HepG2 (cell line): ENCODE measurements at regions of chr5 and their contacts with region 1.

Region 1: GRCh38 chr5:79020861-79021561 is 35.9 kb upstream of the ARSB start:
- DNase-seq: peak; percentile 27
- ATAC-seq: peak; percentile 61
- H3K4me3 ChIP-seq: no peak overlapping the region
- H3K27ac ChIP-seq: no peak overlapping the region
- H3K4me1 ChIP-seq: peaks cover 33% of the 10 kb centered on the region
- H3K27me3 ChIP-seq: no peaks in the 10 kb centered on the region
- CTCF ChIP-seq: peak; percentile 83
- EP300 ChIP-seq: no peak
- POLR2A ChIP-seq: no peak
- RAD21 ChIP-seq: peak; percentile 89

Region 2: GRCh38 chr5:78779771-78780616 is 241.0 kb before region 1 on chr5:
- CTCF ChIA-PET with region 1: no interaction called
- POLR2A ChIA-PET with region 1: no interaction called
- in situ Hi-C with region 1: no loop called
- intact Hi-C with region 1: no loop called
- DNase-seq: no peak
- ATAC-seq: no peak
- H3K4me3 ChIP-seq: no peak overlapping the region
- H3K27ac ChIP-seq: no peak overlapping the region
- H3K4me1 ChIP-seq: no peaks in the 10 kb centered on the region
- H3K27me3 ChIP-seq: no peaks in the 10 kb centered on the region
- CTCF ChIP-seq: no peak
- EP300 ChIP-seq: no peak
- POLR2A ChIP-seq: no peak
- RAD21 ChIP-seq: no peak

Region 3: GRCh38 chr5:78984439-78985115 is 36.4 kb before region 1 on chr5:
- CTCF ChIA-PET with region 1: no interaction called
- POLR2A ChIA-PET with region 1: interaction called, 46 read pairs
- in situ Hi-C with region 1: no loop called
- intact Hi-C with region 1: loop called (anchors 2 kb)
- DNase-seq: peak; percentile 79
- ATAC-seq: peak; percentile 67
- H3K4me3 ChIP-seq: peak overlapping the region; percentile 52 to 93 (median 88)
- H3K27ac ChIP-seq: peak overlapping the region; percentile 99
- H3K4me1 ChIP-seq: peaks cover 57% of the 10 kb centered on the region
- H3K27me3 ChIP-seq: no peaks in the 10 kb centered on the region; a peak in 1 of 5 replicates
- CTCF ChIP-seq: peak; percentile 40
- EP300 ChIP-seq: peak in 1 of 2 experiments; percentile 48; a peak in 2 of 4 replicates
- POLR2A ChIP-seq: peak; percentile 68 to 82
- RAD21 ChIP-seq: peak; percentile 35; the same call in 1 of the 2 replicates

Region 4: DNA sequence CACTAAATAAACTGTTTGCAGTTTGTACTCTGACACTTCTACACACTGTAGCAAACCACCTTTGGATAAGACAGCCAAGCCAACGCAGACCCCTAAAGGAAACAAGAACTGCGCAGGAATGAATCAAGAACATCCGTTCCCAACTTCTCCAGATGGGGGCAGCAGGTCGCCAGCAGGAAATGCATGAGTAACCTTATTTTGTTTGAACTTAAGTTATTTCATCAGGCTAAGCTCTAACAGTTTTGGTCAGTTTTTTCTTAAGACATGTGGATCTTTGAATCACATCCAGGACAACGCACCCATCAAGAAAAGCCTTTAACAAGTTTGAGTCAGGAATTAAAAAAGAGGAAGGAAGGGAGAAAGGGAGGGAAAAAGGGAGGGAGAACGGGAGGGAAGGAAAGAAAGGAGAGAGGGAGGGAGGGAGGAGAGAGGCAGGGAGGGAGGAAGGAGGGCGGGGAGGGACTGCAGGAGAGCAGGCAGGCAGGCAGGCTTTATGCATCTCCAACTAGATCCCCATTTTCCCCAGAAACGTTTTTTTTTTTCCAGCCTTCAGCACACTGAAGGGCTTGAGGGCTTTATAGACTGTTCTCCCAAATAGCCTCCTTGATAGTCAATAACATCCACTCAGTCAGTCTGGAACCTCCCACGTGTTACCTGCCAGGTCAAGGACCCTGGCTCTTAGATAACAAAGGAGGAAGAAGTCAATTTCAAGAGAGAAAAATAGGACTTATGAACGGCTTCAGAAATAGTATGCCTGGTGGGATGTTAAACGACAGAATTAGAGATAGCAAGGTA is 112.8 kb after region 1 on chr5:
- CTCF ChIA-PET with region 1: interaction called, 53 read pairs
- POLR2A ChIA-PET with region 1: interaction called, 11 read pairs
- in situ Hi-C with region 1: loop called (anchors 5 kb)
- intact Hi-C with region 1: loop called (anchors 1 kb)
- DNase-seq: peak; percentile 64
- ATAC-seq: peak; percentile 84
- H3K4me3 ChIP-seq: peak overlapping the region in 2 of 3 experiments; percentile 8 to 30; a peak in 4 of 6 replicates
- H3K27ac ChIP-seq: no peak overlapping the region
- H3K4me1 ChIP-seq: peaks cover 24% of the 10 kb centered on the region
- H3K27me3 ChIP-seq: no peaks in the 10 kb centered on the region
- CTCF ChIP-seq: peak; percentile 79
- EP300 ChIP-seq: no peak
- POLR2A ChIP-seq: no peak
- RAD21 ChIP-seq: peak; percentile 32; the same call in 1 of the 2 replicates

Region 5: DNA sequence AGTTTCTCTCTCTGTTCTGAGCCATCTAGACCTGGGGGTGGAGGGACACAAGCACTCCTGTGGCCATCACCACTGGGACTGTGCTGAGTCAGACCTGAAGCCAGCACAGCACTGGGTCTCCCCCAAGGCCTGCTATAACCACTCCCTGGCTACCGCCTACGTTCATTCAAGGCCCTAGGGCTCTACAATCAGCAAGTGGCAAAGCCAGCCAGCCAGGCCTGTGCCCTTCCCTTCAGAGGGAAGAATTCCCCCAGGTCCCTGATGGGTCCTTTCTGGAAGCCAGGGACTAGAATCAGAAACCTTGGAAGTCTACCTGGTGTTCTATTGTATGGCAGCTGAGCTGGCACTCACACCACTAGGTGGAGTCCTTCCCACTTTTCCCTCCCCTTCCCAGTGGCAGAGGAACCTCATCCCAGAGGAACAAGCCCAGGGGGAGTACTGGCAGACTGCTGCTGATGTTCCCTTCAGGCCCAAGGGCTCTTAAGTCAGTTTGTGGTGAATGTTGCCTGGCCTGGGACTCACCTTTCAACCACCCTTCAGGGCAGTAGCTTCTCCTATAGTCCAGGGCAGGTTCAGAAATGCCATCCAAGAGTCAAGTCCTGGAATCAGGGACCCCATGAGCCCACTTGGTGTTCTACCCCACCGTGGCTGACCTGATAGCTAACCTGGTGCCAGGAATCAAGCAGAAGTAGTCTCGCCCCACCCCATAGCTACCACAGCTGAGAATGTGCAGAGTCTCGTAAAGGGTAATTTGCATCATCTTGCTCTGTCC is 235.0 kb after region 1 on chr5:
- CTCF ChIA-PET with region 1: no interaction called
- POLR2A ChIA-PET with region 1: no interaction called
- in situ Hi-C with region 1: no loop called
- intact Hi-C with region 1: loop called (anchors 10 kb)
- DNase-seq: peak; percentile 45
- ATAC-seq: peak; percentile 95
- H3K4me3 ChIP-seq: no peak overlapping the region
- H3K27ac ChIP-seq: no peak overlapping the region
- H3K4me1 ChIP-seq: peaks cover 35% of the 10 kb centered on the region
- H3K27me3 ChIP-seq: no peaks in the 10 kb centered on the region
- CTCF ChIP-seq: peak; percentile 88
- EP300 ChIP-seq: no peak
- POLR2A ChIP-seq: no peak
- RAD21 ChIP-seq: no peak

Region 6: GRCh38 chr5:79464695-79465332 is 443.8 kb after region 1 on chr5:
- CTCF ChIA-PET with region 1: no interaction called
- POLR2A ChIA-PET with region 1: no interaction called
- in situ Hi-C with region 1: loop called (anchors 25 kb)
- intact Hi-C with region 1: loop called (anchors 2 kb)
- DNase-seq: no peak
- ATAC-seq: no peak
- H3K4me3 ChIP-seq: no peak overlapping the region
- H3K27ac ChIP-seq: no peak overlapping the region
- H3K4me1 ChIP-seq: no peaks in the 10 kb centered on the region
- H3K27me3 ChIP-seq: no peaks in the 10 kb centered on the region
- CTCF ChIP-seq: peak; percentile 61
- EP300 ChIP-seq: no peak
- POLR2A ChIP-seq: no peak
- RAD21 ChIP-seq: no peak